ENCODE measurements at regions of chr2 and their contacts with region 1.

Region 1: DNA sequence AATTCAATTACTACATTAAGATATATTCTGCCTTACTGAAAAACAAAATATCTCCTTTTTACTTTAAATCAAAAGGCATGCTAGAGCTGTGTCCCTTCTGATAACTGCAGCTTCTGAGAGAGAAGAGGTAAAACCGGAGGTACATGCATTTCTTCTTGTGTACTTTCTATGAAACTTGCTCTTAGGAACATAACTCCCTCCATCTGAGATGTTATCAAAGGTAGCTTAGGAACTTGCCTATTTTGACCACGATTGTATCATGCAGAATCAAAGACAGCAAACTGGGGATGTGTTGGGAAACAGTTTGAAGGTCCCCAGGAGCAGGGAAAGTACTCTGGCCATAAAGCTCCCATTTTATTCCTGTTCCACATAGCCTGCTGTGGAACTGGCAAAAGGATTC is 213.7 kb upstream of the MEIS1 start:
- DNase-seq: no peak
- ATAC-seq: no peak
- H3K4me3 ChIP-seq: no peak overlapping the region
- H3K27ac ChIP-seq: no peak overlapping the region
- H3K4me1 ChIP-seq: no peaks in the 10 kb centered on the region
- H3K27me3 ChIP-seq: no peaks in the 10 kb centered on the region; the same call in 1 of the 2 replicates
- CTCF ChIP-seq: no peak

Region 2: DNA sequence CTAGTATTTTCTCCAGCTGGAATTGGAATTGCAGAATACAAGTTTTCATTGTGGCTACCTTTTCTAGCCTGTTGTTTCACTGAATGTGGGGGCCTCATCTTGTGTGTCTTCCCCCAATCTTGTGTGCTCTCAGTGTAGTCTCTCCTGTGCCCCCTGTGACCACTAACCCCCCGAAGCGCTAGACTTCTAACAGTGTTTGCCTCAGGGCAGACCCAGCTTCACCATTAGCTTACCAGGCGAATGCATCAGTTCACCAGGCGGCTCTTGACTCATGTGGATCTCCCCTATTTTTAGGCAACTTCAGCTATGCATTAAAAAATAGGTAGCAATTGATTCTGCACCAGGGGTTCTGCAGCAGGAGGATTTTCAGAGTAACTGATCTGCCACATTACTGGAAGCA is 162.5 kb before region 1 on chr2:
- CTCF ChIA-PET with region 1: no interaction called
- POLR2A ChIA-PET with region 1: interaction called, 12 read pairs
- in situ Hi-C with region 1: no loop called
- intact Hi-C with region 1: no loop called
- DNase-seq: no peak
- ATAC-seq: no peak
- H3K4me3 ChIP-seq: no peak overlapping the region
- H3K27ac ChIP-seq: no peak overlapping the region
- H3K4me1 ChIP-seq: no peaks in the 10 kb centered on the region
- H3K27me3 ChIP-seq: 0 out of 2 replicates have a peak, but pooled peaks cover 4% of the 10 kb centered on the region
- CTCF ChIP-seq: no peak